ENCODE measurements at regions of chr15 and their contacts with region 1.

Region 1: DNA sequence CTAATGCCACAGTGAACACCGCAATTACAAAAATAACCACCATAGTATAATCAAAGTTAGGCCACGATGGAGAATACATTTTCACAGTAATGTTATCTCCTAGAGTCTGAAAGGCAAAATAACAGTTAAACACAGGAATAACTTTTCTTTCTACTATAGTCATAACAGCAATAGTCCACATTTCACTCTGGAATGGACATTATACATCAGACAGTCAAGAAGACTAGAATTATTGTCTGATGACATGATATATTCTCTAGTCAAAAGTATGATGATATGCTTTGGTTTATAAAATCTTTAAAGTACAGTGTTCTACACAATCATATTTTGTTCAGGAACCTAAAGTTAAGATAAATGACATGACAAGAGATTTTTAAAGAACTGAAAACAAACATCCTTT is 18.0 kb downstream of the SPPL2A start:
- DNase-seq: no peak

Region 2: DNA sequence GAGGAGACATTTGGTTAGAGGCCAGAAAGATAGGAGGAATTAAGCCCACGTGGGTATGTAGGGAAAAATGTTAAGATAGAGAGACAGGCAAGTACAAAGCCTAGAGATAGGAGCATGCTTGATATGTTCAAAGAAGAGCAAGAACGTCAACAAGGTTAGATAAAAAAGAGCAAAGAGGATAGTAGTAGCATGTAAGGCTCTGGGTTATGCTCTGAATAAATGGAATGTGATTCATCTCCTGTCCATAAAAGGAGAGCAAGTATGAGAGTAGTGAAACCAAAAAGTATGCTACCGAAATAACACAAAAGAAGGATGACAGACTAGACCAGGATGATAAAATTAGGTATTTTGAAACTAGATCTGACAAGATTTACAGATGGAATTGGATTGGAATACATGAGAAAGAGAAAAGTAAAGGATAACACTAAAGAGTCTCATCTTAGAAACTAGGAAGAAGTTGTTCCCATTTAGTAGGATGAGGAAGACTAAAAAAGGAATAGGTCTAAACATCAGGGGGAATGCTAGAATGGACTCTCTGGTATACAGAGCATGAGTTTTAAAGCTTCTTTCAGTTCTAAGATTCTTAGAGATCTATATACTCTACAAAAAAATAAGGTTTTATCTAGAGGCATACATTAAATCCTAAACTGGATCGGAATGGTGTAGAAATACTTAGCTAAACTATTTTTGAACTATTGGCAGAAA is 120.0 kb before region 1 on chr15:
- intact Hi-C with region 1: no loop called
- DNase-seq: no peak

Region 3: GRCh38 chr15:50712018-50712417 is 35.5 kb before region 1 on chr15:
- intact Hi-C with region 1: loop called (anchors 5 kb)
- DNase-seq: no peak